ENCODE measurements at regions of chr20 and their contacts with region 1.

Region 1: GRCh38 chr20:41232973-41233926 is 84.3 kb downstream of the ZHX3 start:
- DNase-seq: no peak
- H3K4me3 Mint-ChIP-seq: no peak overlapping the region
- H3K27ac Mint-ChIP-seq: no peak overlapping the region
- H3K4me1 Mint-ChIP-seq: peaks cover 35% of the 10 kb centered on the region
- H3K27me3 Mint-ChIP-seq: no peaks in the 10 kb centered on the region

Region 2: DNA sequence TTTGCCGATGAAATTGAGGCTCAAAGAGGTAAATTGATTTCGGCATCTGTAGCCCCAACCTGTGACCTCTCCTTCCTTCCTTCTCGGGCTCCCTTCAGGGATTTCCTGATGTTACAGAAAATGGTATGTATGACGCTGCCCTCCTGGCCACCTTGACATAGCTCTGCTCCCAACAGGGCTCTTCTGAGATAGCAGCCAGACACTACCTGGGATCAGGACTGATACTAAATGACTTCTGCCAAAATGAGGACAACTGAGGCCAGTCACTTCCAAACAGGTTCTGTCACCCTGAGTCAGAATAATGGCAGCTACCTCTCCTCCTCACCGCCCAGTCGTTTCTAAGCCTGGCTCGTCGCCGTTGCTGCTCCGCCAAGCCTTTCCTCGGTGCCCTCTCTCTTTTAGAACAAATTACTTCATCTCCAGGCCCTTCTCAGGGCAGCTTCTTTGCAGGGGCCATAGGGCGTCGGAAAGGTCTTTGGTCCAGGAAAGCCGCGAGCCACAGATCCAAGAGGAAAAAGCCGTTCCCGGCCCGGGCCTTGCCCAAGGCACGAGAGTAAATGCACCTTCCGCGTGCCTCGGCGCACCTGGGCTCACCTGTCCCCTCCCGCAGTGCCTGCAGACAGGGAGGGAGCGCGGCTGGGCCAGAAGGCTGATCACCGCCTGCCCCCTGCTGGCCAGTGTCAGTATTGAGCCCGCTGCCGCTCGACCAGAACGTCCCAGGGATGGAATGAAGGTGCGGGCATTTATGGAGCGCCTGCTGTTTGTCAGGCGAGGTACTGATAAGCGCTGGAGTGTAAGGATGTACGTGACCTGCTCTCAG is 106.5 kb after region 1 on chr20:
- CTCF ChIA-PET with region 1: interaction called, 15 read pairs
- DNase-seq: peak; percentile 88
- H3K4me3 Mint-ChIP-seq: peak overlapping the region; percentile 58
- H3K27ac Mint-ChIP-seq: no peak overlapping the region
- H3K4me1 Mint-ChIP-seq: peaks cover 13% of the 10 kb centered on the region
- H3K27me3 Mint-ChIP-seq: peaks cover 36% of the 10 kb centered on the region